ENCODE measurements at regions of chr1 and their contacts with region 1.

Region 1: GRCh38 chr1:68358439-68358838 is 91.3 kb downstream of the RPE65 start:
- DNase-seq: no peak
- H3K4me3 ChIP-seq: no peak overlapping the region
- H3K27ac ChIP-seq: no peak overlapping the region
- H3K27me3 ChIP-seq: no peaks in the 10 kb centered on the region
- CTCF ChIP-seq: no peak

Region 2: GRCh38 chr1:68346188-68346808 is 12.1 kb before region 1 on chr1:
- CTCF ChIA-PET with region 1: interaction called, 51 read pairs
- POLR2A ChIA-PET with region 1: no interaction called
- DNase-seq: no peak
- H3K4me3 ChIP-seq: no peak overlapping the region
- H3K27ac ChIP-seq: no peak overlapping the region
- H3K27me3 ChIP-seq: no peaks in the 10 kb centered on the region
- CTCF ChIP-seq: peak; percentile 57

Measured in AG04450 (cell line).